GM23248 (cell line): ENCODE measurements at regions of chr11 and their contacts with region 1.

Region 1: GRCh38 chr11:18394275-18394927 is at the start of gene LDHA:
- DNase-seq: peak; percentile 100
- H3K4me3 ChIP-seq: peak within 1 kb of the TSS; percentile 100
- H3K27ac ChIP-seq: peak within 1 kb of the TSS; percentile 97
- H3K4me1 ChIP-seq: peaks cover 46% of the 10 kb centered on the region
- H3K27me3 ChIP-seq: no peaks in the 10 kb centered on the region
- total RNA-seq, gene LDHA: 2,432 and 2,912 TPM in 2 replicates

Region 2: DNA sequence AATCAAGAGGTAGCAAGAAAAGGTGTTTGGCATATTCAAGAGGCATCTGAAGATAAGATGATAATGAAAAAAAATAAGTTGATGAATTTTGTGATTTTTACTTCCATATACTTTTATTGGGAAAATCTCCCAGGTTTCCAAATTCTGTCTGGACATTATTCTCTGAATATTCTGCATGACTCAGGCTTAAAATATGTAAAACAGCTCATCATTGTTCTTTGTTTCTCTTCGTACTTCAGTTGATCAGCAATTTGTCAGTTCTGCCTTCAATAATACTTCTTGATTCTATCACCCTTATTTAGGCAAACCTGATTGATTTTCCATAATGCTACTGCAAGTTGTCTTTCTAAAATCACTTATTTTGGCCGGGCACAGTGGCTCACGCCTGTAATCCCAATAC is 41.8 kb before region 1 on chr11:
- in situ Hi-C with region 1: loop called (anchors 5 kb)
- DNase-seq: peak; percentile 71
- H3K4me3 ChIP-seq: no peak overlapping the region
- H3K27ac ChIP-seq: peak overlapping the region; percentile 17; the same call in 1 of the 2 replicates
- H3K4me1 ChIP-seq: peaks cover 29% of the 10 kb centered on the region
- H3K27me3 ChIP-seq: no peaks in the 10 kb centered on the region

Region 3: GRCh38 chr11:19121646-19122045 is 727.2 kb after region 1 on chr11:
- in situ Hi-C with region 1: no loop called
- DNase-seq: peak; percentile 35
- H3K4me3 ChIP-seq: no peak overlapping the region
- H3K27ac ChIP-seq: no peak overlapping the region
- H3K4me1 ChIP-seq: peaks cover 6% of the 10 kb centered on the region; the same call in 1 of the 2 replicates
- H3K27me3 ChIP-seq: no peaks in the 10 kb centered on the region